ENCODE measurements at regions of chr1 and their contacts with region 1.

Region 1: GRCh38 chr1:233240829-233241682 is 54.5 kb downstream of the PCNX2 start:
- ATAC-seq: peak; percentile 76 to 96 (median 92)
- H3K4me3 ChIP-seq: no peak overlapping the region
- H3K27ac ChIP-seq: no peak overlapping the region
- H3K4me1 ChIP-seq: peaks cover 14 to 16% of the 10 kb centered on the region in 2 donors

Region 2: DNA sequence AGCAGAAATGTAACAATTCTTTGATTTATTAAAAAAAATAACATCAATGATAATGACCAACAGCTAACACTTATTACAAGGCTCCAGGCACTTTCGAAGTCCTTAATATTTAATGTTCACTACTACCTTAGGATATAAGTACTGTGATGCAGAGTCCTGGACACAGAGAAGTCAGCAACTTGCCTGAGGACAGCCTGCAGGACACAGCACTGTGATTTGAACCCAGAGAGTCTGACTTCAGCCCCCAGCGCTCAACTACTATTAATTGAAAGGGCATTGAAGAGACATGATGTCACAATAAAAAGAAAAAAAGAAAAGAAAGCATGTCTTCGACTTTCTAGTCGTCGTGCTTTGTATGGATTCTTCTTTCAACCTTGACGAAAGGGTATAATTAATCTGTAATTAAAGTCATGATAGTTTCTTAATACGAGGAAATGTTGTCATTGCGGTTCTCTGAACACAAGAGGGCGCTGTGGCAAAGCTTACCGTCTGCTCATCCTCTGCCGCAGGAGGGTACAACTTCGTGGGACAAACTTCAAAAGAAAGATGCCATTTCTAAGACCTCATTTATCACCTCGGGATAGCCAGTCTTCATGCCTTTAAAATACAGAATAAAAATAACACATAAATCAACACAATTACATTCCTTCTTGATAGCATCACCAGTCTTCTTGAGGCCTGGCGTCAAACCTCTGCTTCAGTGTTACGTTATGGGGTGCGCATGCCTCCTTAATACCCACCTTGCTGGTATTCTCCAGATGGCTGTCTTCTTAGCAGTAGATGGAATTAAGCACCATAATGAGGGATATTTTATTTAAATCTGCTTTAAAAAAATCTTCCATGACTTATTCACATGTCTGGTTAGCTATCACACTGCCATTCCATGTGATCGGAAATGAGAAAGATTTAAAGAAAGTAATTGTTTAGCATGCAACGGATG is 1374.4 kb before region 1 on chr1:
- in situ Hi-C with region 1: loop called in 1 of 9 experiments (anchors 25 kb)
- ATAC-seq: peak in 7 of 8 experiments; percentile 36 to 72 (median 50)
- H3K4me3 ChIP-seq: no peak overlapping the region
- H3K27ac ChIP-seq: no peak overlapping the region
- H3K4me1 ChIP-seq: peaks cover 2 to 18% of the 10 kb centered on the region in 2 donors

Region 3: GRCh38 chr1:231885209-231885854 is 1355.7 kb before region 1 on chr1:
- in situ Hi-C with region 1: loop called in 1 of 9 experiments (anchors 25 kb)
- ATAC-seq: no peak
- H3K4me3 ChIP-seq: no peak overlapping the region
- H3K27ac ChIP-seq: no peak overlapping the region
- H3K4me1 ChIP-seq: peaks cover 0 to 4% of the 10 kb centered on the region in 2 donors

Measured in motor neuron (in vitro differentiated cells).